ENCODE measurements at regions of chr14 and their contacts with region 1.

Region 1: GRCh38 chr14:53894456-53894855 is 62.2 kb downstream of the BMP4 start:
- DNase-seq: peak; percentile 55
- H3K4me3 ChIP-seq: no peak overlapping the region
- H3K27ac ChIP-seq: peak overlapping the region; percentile 52
- H3K4me1 ChIP-seq: peaks cover 37% of the 10 kb centered on the region
- H3K27me3 ChIP-seq: no peaks in the 10 kb centered on the region
- CTCF ChIP-seq: no peak
- POLR2A ChIP-seq: no peak

Region 2: DNA sequence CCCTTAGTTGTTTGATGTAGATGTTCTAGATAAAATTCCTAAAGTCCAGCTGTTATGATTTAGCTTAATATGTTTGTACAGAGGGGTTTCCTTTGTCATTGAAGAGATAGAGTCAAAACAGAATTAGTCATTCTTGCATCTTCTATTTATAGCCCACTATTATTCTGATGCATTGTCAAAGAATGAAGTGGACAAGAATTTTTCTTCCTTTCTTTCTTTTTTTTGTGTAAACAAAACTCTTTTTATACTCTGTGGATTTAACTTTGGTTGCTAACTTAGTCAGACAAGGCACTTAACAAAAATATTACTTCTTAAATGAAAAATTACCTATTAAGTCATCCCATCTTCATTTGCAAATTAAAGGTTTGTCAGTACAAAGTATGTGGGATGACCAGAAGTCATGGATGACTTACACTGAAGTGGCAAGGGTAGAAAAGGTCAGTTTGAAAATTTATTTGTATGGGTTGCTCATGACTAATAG is 525.7 kb before region 1 on chr14:
- CTCF ChIA-PET with region 1: no interaction called
- POLR2A ChIA-PET with region 1: no interaction called
- dilution Hi-C with region 1: no loop called
- intact Hi-C with region 1: loop called (anchors 5 kb)
- DNase-seq: peak; percentile 77
- H3K4me3 ChIP-seq: no peak overlapping the region
- H3K27ac ChIP-seq: peak overlapping the region; percentile 72
- H3K4me1 ChIP-seq: peaks cover 45% of the 10 kb centered on the region
- H3K27me3 ChIP-seq: no peaks in the 10 kb centered on the region
- CTCF ChIP-seq: no peak
- POLR2A ChIP-seq: no peak

Region 3: GRCh38 chr14:53528185-53528671 is 366.2 kb before region 1 on chr14:
- CTCF ChIA-PET with region 1: no interaction called
- POLR2A ChIA-PET with region 1: no interaction called
- dilution Hi-C with region 1: no loop called
- intact Hi-C with region 1: no loop called
- DNase-seq: no peak
- H3K4me3 ChIP-seq: no peak overlapping the region
- H3K27ac ChIP-seq: no peak overlapping the region
- H3K4me1 ChIP-seq: no peaks in the 10 kb centered on the region
- H3K27me3 ChIP-seq: peaks cover 0 to 3% of the 10 kb centered on the region in 2 experiments
- CTCF ChIP-seq: no peak
- POLR2A ChIP-seq: no peak

Region 4: GRCh38 chr14:53663709-53664108 is 230.7 kb before region 1 on chr14:
- CTCF ChIA-PET with region 1: interaction called, 6 read pairs
- POLR2A ChIA-PET with region 1: interaction called, 3 read pairs
- dilution Hi-C with region 1: no loop called
- intact Hi-C with region 1: loop called (anchors 2 kb)
- DNase-seq: peak; percentile 51
- H3K4me3 ChIP-seq: no peak overlapping the region
- H3K27ac ChIP-seq: no peak overlapping the region
- H3K4me1 ChIP-seq: peaks cover 9% of the 10 kb centered on the region
- H3K27me3 ChIP-seq: no peaks in the 10 kb centered on the region
- CTCF ChIP-seq: peak; percentile 18 to 46
- POLR2A ChIP-seq: no peak

Region 5: DNA sequence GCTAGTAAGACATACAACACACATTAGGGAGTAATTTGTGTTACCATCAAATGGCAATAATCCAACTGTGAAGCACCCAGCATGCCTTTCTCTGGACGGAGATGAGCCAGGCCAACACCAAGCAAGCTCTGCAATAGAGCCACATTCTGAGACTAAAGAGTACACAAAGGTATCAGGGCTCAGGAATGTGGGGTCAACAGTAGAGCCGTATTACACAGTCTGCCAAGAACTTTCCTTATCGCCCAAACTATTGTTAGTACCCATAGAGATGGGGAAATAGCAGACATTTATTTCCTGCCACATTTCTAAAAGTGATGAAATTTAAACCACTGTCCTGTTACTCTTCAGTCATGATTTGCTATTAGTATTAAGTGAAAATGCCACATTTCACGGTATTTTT is 51.5 kb before region 1 on chr14:
- CTCF ChIA-PET with region 1: interaction called, 3 read pairs
- POLR2A ChIA-PET with region 1: no interaction called
- dilution Hi-C with region 1: no loop called
- intact Hi-C with region 1: loop called (anchors 1 kb)
- DNase-seq: peak; percentile 75
- H3K4me3 ChIP-seq: no peak overlapping the region
- H3K27ac ChIP-seq: peak overlapping the region; percentile 87
- H3K4me1 ChIP-seq: peaks cover 34% of the 10 kb centered on the region
- H3K27me3 ChIP-seq: no peaks in the 10 kb centered on the region
- CTCF ChIP-seq: no peak
- POLR2A ChIP-seq: peak; percentile 67

Region 6: DNA sequence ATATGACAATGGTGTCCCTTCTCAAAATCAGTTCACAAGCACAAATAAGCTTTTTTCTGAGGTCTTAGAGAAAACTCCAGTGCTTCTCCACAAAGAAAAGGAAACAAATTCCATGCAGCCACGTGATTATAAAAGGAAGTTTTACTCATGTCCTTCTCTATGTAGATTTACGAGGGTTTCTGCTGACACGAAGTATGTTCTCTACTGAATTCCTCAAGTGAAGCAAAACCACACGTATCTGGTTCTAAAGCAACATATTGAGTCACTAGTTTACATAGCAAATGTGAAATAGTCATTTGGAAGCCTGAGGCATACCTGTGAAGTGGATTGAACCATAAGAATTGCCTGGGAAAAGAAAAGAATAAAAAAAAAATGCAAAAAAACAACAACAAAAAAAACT is 30.3 kb after region 1 on chr14:
- CTCF ChIA-PET with region 1: interaction called, 4 read pairs
- POLR2A ChIA-PET with region 1: no interaction called
- dilution Hi-C with region 1: no loop called
- intact Hi-C with region 1: loop called (anchors 2 kb)
- DNase-seq: peak; percentile 88
- H3K4me3 ChIP-seq: peak overlapping the region in 1 of 3 experiments; percentile 31
- H3K27ac ChIP-seq: peak overlapping the region; percentile 77
- H3K4me1 ChIP-seq: peaks cover 30% of the 10 kb centered on the region
- H3K27me3 ChIP-seq: no peaks in the 10 kb centered on the region
- CTCF ChIP-seq: no peak
- POLR2A ChIP-seq: no peak

Region 7: GRCh38 chr14:54108481-54109471 is 214.3 kb after region 1 on chr14:
- CTCF ChIA-PET with region 1: no interaction called
- POLR2A ChIA-PET with region 1: no interaction called
- dilution Hi-C with region 1: no loop called
- intact Hi-C with region 1: loop called (anchors 1 kb)
- DNase-seq: peak; percentile 94
- H3K4me3 ChIP-seq: peak overlapping the region in 1 of 3 experiments; percentile 17
- H3K27ac ChIP-seq: peak overlapping the region; percentile 96
- H3K4me1 ChIP-seq: peaks cover 44% of the 10 kb centered on the region
- H3K27me3 ChIP-seq: no peaks in the 10 kb centered on the region
- CTCF ChIP-seq: no peak
- POLR2A ChIP-seq: no peak

Region 8: GRCh38 chr14:54338696-54339317 is 444.4 kb after region 1 on chr14:
- CTCF ChIA-PET with region 1: interaction called, 3 read pairs
- POLR2A ChIA-PET with region 1: no interaction called
- dilution Hi-C with region 1: no loop called
- intact Hi-C with region 1: loop called (anchors 2 kb)
- DNase-seq: peak; percentile 78
- H3K4me3 ChIP-seq: no peak overlapping the region
- H3K27ac ChIP-seq: no peak overlapping the region
- H3K4me1 ChIP-seq: peaks cover 10% of the 10 kb centered on the region
- H3K27me3 ChIP-seq: no peaks in the 10 kb centered on the region
- CTCF ChIP-seq: peak; percentile 63 to 68
- POLR2A ChIP-seq: no peak